Heart right ventricle (tissue), 16 donors: ENCODE measurements at regions of chr14 and their contacts with region 1.

Region 1: DNA sequence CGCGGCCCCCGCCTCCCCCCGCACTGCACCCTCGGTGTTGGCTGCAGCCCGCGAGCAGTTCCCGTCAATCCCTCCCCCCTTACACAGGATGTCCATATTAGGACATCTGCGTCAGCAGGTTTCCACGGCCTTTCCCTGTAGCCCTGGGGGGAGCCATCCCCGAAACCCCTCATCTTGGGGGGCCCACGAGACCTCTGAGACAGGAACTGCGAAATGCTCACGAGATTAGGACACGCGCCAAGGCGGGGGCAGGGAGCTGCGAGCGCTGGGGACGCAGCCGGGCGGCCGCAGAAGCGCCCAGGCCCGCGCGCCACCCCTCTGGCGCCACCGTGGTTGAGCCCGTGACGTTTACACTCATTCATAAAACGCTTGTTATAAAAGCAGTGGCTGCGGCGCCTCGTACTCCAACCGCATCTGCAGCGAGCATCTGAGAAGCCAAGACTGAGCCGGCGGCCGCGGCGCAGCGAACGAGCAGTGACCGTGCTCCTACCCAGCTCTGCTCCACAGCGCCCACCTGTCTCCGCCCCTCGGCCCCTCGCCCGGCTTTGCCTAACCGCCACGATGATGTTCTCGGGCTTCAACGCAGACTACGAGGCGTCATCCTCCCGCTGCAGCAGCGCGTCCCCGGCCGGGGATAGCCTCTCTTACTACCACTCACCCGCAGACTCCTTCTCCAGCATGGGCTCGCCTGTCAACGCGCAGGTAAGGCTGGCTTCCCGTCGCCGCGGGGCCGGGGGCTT is at the start of gene FOS:
- DNase-seq: peak; percentile 87 to 96
- ATAC-seq: peak; percentile 73 to 88 (median 83)
- H3K4me3 ChIP-seq: peak within 1 kb of the TSS; percentile 70 to 91 (median 82)
- H3K27ac ChIP-seq: peak within 1 kb of the TSS; percentile 97 to 100 (median 100)
- H3K4me1 ChIP-seq: peaks cover 3 to 76% (median 38%) of the 10 kb centered on the region in 9 donors
- H3K27me3 ChIP-seq: no peaks in the 10 kb centered on the region
- CTCF ChIP-seq: no peak
- total RNA-seq, gene FOS: 9.3 to 173 (median 64.0) TPM

Region 2: DNA sequence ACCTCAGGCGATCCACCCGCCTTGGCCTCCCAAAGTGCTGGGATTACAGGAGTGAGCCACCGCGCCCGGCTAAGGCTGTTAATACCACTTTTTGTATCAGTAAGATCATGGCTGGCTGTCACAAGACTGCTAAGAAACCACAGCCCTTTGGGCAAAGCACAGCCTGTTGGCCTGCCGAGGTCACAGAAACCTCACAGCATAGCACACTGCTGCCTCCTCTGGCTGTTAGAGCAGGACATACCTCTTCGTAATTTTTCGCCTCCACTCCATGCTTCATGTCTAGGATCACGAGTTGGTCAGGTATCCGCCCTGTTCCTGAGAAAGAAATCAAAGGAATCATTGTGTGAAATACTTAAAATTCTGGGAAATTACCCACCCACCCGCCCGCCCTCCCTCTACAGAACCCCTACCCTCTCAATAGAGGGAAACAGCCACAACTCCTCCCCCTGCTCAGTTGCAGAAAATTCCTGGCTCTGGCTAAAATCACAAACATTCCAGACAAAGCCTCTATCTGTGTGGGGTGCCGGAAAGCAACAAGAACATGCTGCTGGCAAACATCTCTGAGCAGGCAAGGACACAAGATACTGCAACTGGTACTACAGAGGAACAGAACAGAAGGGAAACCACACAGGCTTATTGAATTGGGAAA is 131.0 kb before region 1 on chr14:
- intact Hi-C with region 1: loop called in 2 of 10 experiments (anchors 5 kb)
- DNase-seq: peak; percentile 53 to 74
- ATAC-seq: peak; percentile 79 to 94 (median 92)
- H3K4me3 ChIP-seq: peak overlapping the region in 1 of 10 donors; percentile 3
- H3K27ac ChIP-seq: peak overlapping the region; percentile 73 to 92 (median 84)
- H3K4me1 ChIP-seq: peaks cover 9 to 72% (median 49%) of the 10 kb centered on the region in 9 donors
- H3K27me3 ChIP-seq: no peaks in the 10 kb centered on the region
- CTCF ChIP-seq: peak; percentile 22 to 72 (median 51)

Region 3: GRCh38 chr14:75238756-75239455 is 39.7 kb before region 1 on chr14:
- intact Hi-C with region 1: loop called in 2 of 10 experiments (anchors 1 kb)
- DNase-seq: peak in 1 of 2 donors; percentile 37
- ATAC-seq: peak in 2 of 8 donors; percentile 13 to 22
- H3K4me3 ChIP-seq: no peak overlapping the region
- H3K27ac ChIP-seq: peak overlapping the region; percentile 77 to 96 (median 86)
- H3K4me1 ChIP-seq: peaks cover 9 to 63% (median 34%) of the 10 kb centered on the region in 9 donors
- H3K27me3 ChIP-seq: no peaks in the 10 kb centered on the region
- CTCF ChIP-seq: peak in 4 of 9 donors; percentile 11 to 49 (median 42)

Region 4: DNA sequence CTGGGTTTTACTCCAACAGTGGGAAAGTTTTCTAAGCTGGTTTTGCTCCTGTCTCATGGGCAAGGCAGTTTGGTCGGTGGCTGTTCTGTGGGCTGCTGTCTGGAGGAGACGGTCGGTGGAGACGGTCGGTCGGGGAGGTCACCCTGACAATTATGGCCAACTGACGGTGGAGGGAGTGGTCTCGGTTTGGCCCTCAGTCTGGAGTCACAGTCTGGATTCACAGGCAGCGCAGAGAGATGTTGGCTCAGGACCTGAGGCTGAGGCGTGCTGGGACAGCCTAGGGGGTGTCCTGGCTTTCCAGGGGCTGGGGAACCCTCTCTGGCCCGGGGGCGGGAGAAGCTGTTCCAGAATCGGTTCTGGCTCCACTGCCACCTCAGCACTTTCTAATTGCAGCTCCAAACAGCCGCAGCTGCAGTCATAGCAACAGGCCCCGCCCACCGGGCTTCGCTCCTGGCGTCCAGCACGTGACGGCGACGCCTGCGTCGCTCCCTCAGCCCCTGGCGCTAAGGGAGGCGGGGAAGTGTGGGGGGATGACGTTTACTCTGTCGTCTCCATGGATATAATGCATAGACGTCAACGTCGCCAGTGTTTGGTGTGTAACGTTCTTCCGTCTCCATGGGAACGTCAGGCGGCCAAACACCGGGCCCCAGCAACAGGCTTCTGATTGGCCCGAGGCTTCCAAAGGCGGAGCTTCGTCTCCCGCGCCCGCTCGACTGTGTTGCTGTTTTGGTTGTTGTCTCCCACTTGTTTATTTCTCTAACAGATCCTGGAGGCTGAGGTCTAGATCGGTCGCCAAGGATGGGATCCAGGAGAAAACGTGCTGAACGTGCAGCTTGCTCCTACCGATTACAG is 19.8 kb before region 1 on chr14:
- intact Hi-C with region 1: loop called in 5 of 10 experiments (anchors 1 to 2 kb)
- DNase-seq: peak; percentile 99 to 100
- ATAC-seq: peak; percentile 95 to 98 (median 97)
- H3K4me3 ChIP-seq: peak overlapping the region in 9 of 10 donors; percentile 20 to 55 (median 47)
- H3K27ac ChIP-seq: peak overlapping the region; percentile 79 to 98 (median 95)
- H3K4me1 ChIP-seq: peaks cover 6 to 43% (median 33%) of the 10 kb centered on the region in 9 donors
- H3K27me3 ChIP-seq: no peaks in the 10 kb centered on the region
- CTCF ChIP-seq: no peak

Region 5: DNA sequence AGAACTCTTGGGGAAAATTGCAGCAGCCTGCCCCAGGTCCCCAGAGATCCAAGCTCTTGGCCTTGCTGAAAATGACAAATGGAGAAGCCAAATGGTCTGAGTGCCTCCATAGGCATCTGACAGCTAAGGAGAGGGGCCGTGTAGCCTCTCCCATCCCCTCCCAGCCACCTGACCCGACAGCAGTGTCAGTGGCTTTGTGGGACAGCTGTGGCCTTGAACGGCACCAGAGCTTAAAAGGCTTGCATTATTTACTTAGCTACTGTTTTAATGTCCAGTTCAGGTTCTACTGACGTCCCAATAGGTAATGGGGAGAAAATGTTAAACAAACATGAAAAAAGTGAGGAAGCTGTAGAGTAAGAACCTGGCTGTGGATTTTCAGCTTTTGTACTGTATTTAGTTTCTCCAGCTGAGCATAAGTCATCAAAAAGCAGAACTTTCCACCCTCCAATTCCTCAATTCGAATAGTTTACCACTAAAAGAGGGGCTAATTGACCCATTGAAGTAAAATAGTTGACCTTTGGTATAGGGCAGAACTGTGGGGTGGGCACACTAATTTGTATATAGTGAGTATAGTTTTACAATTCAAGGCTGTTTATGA is 50.1 kb after region 1 on chr14:
- intact Hi-C with region 1: no loop called
- DNase-seq: no peak
- ATAC-seq: no peak
- H3K4me3 ChIP-seq: no peak overlapping the region
- H3K27ac ChIP-seq: no peak overlapping the region
- H3K4me1 ChIP-seq: peaks cover 0 to 12% (median 0%) of the 10 kb centered on the region in 9 donors
- H3K27me3 ChIP-seq: no peaks in the 10 kb centered on the region
- CTCF ChIP-seq: no peak